Activated CD4-positive, alpha-beta memory T cell treated with anti-CD3 and anti-CD28 coated beads for 36 hours (primary cell): ENCODE measurements at regions of chr11 and their contacts with region 1.

Region 1: GRCh38 chr11:125941619-125942611 is 3.9 kb upstream of the VSIG10L2 start:
- DNase-seq: peak; percentile 69
- H3K4me3 Mint-ChIP-seq: no peak overlapping the region
- H3K27ac Mint-ChIP-seq: no peak overlapping the region
- H3K4me1 Mint-ChIP-seq: peaks cover 9% of the 10 kb centered on the region
- H3K27me3 Mint-ChIP-seq: no peaks in the 10 kb centered on the region

Region 2: DNA sequence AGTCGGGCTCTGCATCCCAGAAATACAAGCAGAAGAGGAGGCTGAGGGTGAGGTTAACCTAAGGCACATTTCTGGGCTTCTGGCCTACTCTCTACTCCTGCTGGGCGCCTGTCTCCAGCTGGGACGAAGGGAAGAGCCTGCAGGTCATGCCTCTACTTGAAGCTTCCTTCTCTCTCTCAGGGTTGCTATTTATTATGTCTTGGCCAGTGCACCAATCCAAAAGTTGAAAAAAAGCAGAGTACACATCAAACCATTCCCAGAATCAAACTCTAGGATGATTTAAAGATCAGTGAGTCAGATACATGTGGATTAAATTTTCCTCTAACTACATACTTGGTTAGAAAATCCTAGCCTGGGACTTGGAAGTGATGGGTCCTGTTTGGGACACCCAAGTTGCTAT is 180.9 kb after region 1 on chr11:
- CTCF ChIA-PET with region 1: no interaction called
- POLR2A ChIA-PET with region 1: interaction called, 3 read pairs
- intact Hi-C with region 1: loop called (anchors 5 kb)
- DNase-seq: no peak
- H3K4me3 Mint-ChIP-seq: no peak overlapping the region
- H3K27ac Mint-ChIP-seq: no peak overlapping the region
- H3K4me1 Mint-ChIP-seq: no peaks in the 10 kb centered on the region
- H3K27me3 Mint-ChIP-seq: no peaks in the 10 kb centered on the region

Region 3: DNA sequence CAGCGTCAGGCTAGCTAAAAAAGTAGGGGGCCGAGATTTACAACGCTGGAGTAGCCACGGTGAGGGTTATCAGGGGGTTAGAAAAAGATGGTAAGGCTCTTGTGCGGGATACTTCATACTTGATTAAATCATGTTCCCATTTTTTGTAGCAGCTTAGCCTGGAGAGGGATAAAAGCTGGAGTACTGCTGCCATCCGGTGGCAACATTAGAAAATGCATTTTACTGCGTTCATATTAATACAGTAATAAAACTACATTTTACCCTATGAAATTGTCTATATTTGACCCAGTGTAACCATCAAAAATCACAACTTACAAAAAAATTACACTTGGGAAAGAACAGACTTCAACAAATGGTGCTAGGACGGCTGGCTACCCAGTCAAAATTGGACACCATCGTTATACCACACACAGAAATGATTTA is 252.2 kb after region 1 on chr11:
- CTCF ChIA-PET with region 1: interaction called, 66 read pairs
- POLR2A ChIA-PET with region 1: no interaction called
- intact Hi-C with region 1: loop called (anchors 1 kb)
- DNase-seq: peak; percentile 43
- H3K4me3 Mint-ChIP-seq: no peak overlapping the region
- H3K27ac Mint-ChIP-seq: no peak overlapping the region
- H3K4me1 Mint-ChIP-seq: no peaks in the 10 kb centered on the region
- H3K27me3 Mint-ChIP-seq: no peaks in the 10 kb centered on the region